ENCODE measurements at regions of chr7 and their contacts with region 1.

Region 1: GRCh38 chr7:39746103-39746819 is 122.9 kb downstream of the RALA start:
- DNase-seq: peak; percentile 78
- ATAC-seq: peak; percentile 86

Region 2: GRCh38 chr7:39580149-39580874 is 165.9 kb before region 1 on chr7:
- intact Hi-C with region 1: loop called (anchors 2 kb)
- DNase-seq: peak; percentile 68
- ATAC-seq: peak; percentile 95

Region 3: DNA sequence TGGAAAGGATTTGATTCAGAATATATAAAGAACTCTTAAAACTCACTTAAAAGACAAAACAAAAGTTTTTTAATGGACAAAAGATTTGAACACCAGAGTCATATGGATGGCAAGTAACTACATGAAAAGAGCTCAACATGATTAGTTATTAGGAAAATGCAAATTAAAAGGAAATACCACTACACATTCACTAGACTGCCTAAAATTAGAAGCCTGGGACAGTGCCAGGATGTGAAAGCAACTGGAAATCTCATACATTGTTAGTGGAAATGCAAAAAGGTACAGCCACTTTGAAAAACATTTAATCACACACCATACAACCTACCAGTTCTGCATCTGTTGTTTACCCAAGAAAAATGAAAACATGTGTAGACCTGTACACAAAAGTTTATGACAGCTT is 74.1 kb before region 1 on chr7:
- intact Hi-C with region 1: no loop called
- DNase-seq: no peak
- ATAC-seq: no peak

Region 4: DNA sequence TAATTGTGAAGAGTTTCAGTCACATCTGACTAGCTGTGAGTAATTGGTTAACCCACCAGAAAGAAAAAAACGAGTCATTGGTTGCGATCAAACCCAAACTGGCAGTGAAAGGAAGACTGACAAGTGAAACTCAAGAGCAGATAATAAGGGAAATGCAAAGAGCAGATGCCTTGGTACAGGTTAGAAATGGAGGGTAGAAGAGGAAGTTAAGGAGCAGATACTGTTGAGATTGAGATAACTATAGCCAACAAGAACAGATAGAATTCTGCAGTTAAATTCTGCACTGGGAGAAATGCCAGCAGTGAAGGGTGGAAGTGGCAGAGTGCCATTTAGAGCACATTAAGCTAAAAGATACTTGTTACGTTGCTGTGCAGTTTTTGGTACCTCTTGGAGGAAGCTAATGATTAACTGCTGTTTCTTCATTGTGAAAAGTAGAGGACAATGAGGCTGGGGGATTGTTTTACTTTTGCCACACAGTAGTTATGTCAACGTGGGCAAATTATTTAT is 269.6 kb after region 1 on chr7:
- intact Hi-C with region 1: no loop called
- DNase-seq: no peak
- ATAC-seq: peak; percentile 53

Region 5: GRCh38 chr7:40306596-40306995 is 560.3 kb after region 1 on chr7:
- intact Hi-C with region 1: no loop called
- DNase-seq: no peak
- ATAC-seq: no peak